ENCODE measurements at regions of chr9 and their contacts with region 1.

Region 1: GRCh38 chr9:71876106-71876505 is 34.9 kb downstream of the ABHD17B start:
- DNase-seq: no peak
- ATAC-seq: no peak
- H3K4me3 ChIP-seq: no peak overlapping the region
- H3K4me3 Mint-ChIP-seq: no peak overlapping the region
- H3K27ac ChIP-seq: no peak overlapping the region
- H3K27ac Mint-ChIP-seq: peak overlapping the region; percentile 49 to 55
- H3K4me1 ChIP-seq: no peaks in the 10 kb centered on the region
- H3K4me1 Mint-ChIP-seq: peaks cover 36 to 46% of the 10 kb centered on the region in 2 donors
- H3K27me3 ChIP-seq: no peaks in the 10 kb centered on the region
- H3K27me3 Mint-ChIP-seq: no peaks in the 10 kb centered on the region
- CTCF ChIP-seq: no peak

Region 2: GRCh38 chr9:71897577-71897976 is 21.5 kb after region 1 on chr9:
- intact Hi-C with region 1: loop called (anchors 2 kb)
- DNase-seq: peak in 1 of 2 donors; percentile 63
- ATAC-seq: peak; percentile 76 to 84 (median 81)
- H3K4me3 ChIP-seq: peak overlapping the region; percentile 5
- H3K4me3 Mint-ChIP-seq: peak overlapping the region; percentile 87
- H3K27ac ChIP-seq: peak overlapping the region; percentile 80
- H3K27ac Mint-ChIP-seq: peak overlapping the region; percentile 87 to 97
- H3K4me1 ChIP-seq: peaks cover 33% of the 10 kb centered on the region
- H3K4me1 Mint-ChIP-seq: peaks cover 82 to 85% of the 10 kb centered on the region in 2 donors
- H3K27me3 ChIP-seq: no peaks in the 10 kb centered on the region
- H3K27me3 Mint-ChIP-seq: no peaks in the 10 kb centered on the region
- CTCF ChIP-seq: no peak

Region 3: DNA sequence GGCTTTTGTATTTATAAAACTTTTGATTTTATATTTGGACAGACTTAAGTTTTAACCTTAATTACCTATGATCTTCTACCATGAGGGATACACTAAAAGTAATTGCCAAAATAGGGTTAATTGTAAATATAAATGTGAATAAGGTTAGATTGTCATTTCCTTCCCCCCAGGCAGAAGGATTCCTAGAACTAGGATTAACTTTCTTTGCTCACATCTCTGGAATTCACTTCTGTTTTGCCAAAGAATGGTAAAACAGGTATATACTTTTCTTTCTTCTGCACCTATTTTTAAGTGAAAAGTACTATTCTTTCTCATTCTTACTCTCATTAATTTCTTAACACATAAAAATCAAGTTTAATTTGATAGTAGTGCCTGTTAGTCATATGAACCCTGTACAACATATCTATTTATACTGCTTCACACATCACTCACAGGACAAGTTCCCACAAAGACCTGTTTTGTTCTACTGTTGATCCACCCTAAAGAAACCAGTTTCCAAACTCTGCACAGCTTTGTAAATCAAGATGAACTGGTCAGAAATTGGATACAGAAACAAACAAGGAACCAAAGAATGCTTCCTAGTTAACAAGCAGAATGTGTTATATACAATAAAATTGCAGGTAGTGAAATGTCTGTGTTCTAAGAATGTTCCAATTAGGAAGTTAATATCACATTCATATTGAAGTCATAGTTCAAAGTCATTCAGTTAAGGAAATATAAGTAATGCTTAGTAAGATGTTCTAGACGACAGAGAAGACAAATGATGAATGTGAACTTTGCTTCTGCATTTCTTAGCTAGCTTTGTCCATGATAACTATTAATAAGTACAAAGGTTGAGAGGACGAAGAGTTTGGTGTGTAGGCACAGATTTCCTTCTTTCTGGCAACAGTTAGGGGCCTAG is 68.6 kb after region 1 on chr9:
- intact Hi-C with region 1: no loop called
- DNase-seq: no peak
- ATAC-seq: no peak
- H3K4me3 ChIP-seq: no peak overlapping the region
- H3K4me3 Mint-ChIP-seq: no peak overlapping the region
- H3K27ac ChIP-seq: no peak overlapping the region
- H3K27ac Mint-ChIP-seq: peak overlapping the region in 1 of 2 donors; percentile 39
- H3K4me1 ChIP-seq: no peaks in the 10 kb centered on the region
- H3K4me1 Mint-ChIP-seq: peaks cover 27 to 42% of the 10 kb centered on the region in 2 donors
- H3K27me3 ChIP-seq: no peaks in the 10 kb centered on the region
- H3K27me3 Mint-ChIP-seq: no peaks in the 10 kb centered on the region
- CTCF ChIP-seq: no peak